Calu3 (cell line): ENCODE measurements at regions of chr5 and their contacts with region 1.

Region 1: GRCh38 chr5:127723572-127723971 is 20.4 kb downstream of the CCDC192 start:
- DNase-seq: peak; percentile 63
- H3K4me3 Mint-ChIP-seq: no peak overlapping the region
- H3K27ac Mint-ChIP-seq: no peak overlapping the region
- H3K4me1 Mint-ChIP-seq: peaks cover 22% of the 10 kb centered on the region
- H3K27me3 Mint-ChIP-seq: no peaks in the 10 kb centered on the region
- CTCF ChIP-seq: no peak

Region 2: DNA sequence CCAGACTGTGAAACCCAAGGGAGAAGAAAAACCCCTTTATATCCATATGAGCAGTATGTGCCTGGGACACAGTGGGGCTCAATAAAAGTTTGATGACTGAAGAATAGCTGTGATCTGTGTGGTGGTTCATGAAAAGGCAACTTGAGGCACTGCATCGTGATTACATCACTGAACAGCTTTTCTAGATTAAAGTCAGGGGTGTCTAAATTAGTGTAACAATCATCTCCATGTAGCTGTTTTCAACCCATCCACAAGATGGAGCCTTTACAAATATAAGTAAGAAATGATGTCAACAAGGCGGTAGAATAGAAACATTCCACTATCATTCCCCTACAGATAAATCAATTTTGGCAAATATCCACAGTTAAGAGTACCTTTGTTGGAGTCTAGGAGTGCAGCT is 150.6 kb before region 1 on chr5:
- CTCF ChIA-PET with region 1: no interaction called
- intact Hi-C with region 1: loop called (anchors 10 kb)
- DNase-seq: no peak
- H3K4me3 Mint-ChIP-seq: no peak overlapping the region
- H3K27ac Mint-ChIP-seq: no peak overlapping the region
- H3K4me1 Mint-ChIP-seq: peaks cover 24% of the 10 kb centered on the region
- H3K27me3 Mint-ChIP-seq: peaks cover 3% of the 10 kb centered on the region
- CTCF ChIP-seq: peak; percentile 48